ENCODE measurements at regions of chr4 and their contacts with region 1.

Region 1: GRCh38 chr4:17636696-17637622 is 22.5 kb downstream of the MED28 start:
- DNase-seq: peak; percentile 55
- H3K4me3 Mint-ChIP-seq: no peak overlapping the region
- H3K27ac Mint-ChIP-seq: no peak overlapping the region
- H3K4me1 Mint-ChIP-seq: no peaks in the 10 kb centered on the region
- H3K27me3 Mint-ChIP-seq: no peaks in the 10 kb centered on the region

Region 2: DNA sequence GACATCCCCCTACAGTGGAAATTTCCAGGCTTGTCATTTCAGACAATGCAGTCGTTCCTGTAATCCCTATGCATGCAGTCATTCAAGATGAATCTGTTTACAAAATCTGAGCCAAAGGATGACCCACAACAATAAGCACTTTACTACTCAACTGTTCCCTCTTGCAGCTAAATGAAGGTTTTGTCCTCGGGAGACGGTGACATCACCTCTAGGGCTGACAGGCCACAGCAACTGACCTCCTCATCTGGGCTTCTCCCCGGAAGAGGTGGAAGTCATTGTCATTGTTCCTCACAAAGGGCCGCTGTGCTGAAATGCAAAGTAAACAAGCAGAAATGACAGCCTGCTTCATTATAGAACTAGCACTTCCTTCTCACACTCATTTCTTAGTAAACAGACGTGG is 92.8 kb before region 1 on chr4:
- intact Hi-C with region 1: loop called (anchors 1 kb)
- DNase-seq: no peak
- H3K4me3 Mint-ChIP-seq: no peak overlapping the region
- H3K27ac Mint-ChIP-seq: no peak overlapping the region
- H3K4me1 Mint-ChIP-seq: peaks cover 6% of the 10 kb centered on the region
- H3K27me3 Mint-ChIP-seq: peaks cover 16% of the 10 kb centered on the region

Region 3: GRCh38 chr4:17614416-17615299 is 22.3 kb before region 1 on chr4 and contains the start of gene MED28:
- intact Hi-C with region 1: loop called (anchors 2 kb)
- DNase-seq: peak; percentile 92
- H3K4me3 Mint-ChIP-seq: peak within 1 kb of the TSS; percentile 90
- H3K27ac Mint-ChIP-seq: peak within 1 kb of the TSS; percentile 91
- H3K4me1 Mint-ChIP-seq: peaks cover 24% of the 10 kb centered on the region
- H3K27me3 Mint-ChIP-seq: no peaks in the 10 kb centered on the region
- total RNA-seq, gene MED28: 53.2 and 55.7 TPM in 2 replicates

Region 4: DNA sequence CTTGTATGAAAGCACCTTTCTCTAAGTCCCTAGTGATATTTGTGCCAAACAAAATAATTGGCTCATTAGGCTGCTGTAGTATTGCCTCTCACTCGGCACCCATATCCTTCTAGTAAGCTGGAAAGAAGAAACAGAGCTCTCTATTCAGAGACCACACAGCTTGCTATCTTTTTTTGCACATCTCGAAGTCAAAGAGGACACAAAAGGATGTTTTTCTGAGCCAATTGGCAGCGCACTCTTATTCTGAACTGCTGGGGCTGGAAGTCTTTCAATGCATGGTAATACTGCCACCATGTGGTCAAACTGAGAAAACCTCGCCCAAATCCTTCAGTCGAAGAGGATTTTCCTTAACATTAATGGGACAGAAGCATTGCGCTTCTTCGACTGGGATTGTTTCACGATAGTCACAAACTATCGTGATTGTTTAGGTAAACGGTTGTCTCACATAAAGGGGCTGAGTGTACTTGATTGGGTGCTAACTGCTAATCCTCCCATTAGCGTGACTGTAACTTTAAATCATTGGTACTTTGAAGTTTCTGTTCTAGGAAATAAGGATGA is 956.6 kb after region 1 on chr4:
- intact Hi-C with region 1: loop called (anchors 10 kb)
- DNase-seq: peak; percentile 14
- H3K4me3 Mint-ChIP-seq: no peak overlapping the region
- H3K27ac Mint-ChIP-seq: no peak overlapping the region
- H3K4me1 Mint-ChIP-seq: peaks cover 3% of the 10 kb centered on the region
- H3K27me3 Mint-ChIP-seq: peaks cover 2% of the 10 kb centered on the region